BJ (cell line): ENCODE measurements at regions of chr17 and their contacts with region 1.

Region 1: GRCh38 chr17:80331820-80332219 is 71.2 kb downstream of the RNF213 start:
- DNase-seq: no peak
- H3K4me3 ChIP-seq: no peak overlapping the region
- H3K27me3 ChIP-seq: no peaks in the 10 kb centered on the region
- CTCF ChIP-seq: no peak

Region 2: DNA sequence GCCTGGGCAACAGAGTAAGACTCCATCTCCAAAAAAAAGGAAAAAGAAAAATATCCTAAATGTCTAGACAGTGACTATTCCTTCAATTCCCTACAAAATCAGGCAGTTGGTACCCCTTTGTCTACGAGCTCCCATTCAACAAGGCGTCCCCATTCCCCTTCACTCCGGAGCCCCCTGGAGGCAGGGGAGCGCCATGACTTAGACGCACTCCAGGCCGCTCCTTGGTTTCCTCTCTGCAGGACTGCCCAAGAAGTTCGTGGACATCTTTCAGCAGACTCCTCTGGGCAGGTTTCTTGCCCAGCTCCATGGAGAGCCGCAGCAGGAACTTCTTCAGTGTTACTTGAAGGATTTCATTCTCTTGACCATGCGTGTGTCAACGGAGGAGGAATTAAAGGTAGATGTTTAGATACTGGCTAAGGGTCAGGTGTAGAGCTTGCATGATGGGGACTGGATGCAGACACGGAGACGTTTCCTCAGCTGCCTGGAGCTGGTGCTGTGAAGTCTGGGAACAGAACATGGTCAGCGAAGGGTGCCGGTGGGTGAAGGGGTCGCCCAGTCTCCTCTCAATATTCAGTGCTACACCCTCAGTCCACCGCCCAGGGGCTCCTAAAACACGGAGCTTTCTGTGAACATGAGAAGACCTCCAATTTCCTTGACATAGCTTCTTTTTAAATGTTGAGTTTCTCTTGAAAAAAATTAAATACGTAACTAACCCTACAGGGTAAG is 29.8 kb after region 1 on chr17:
- CTCF ChIA-PET with region 1: interaction called, 4 read pairs
- POLR2A ChIA-PET with region 1: interaction called, 19 read pairs
- DNase-seq: no peak
- H3K4me3 ChIP-seq: no peak overlapping the region
- H3K27me3 ChIP-seq: no peaks in the 10 kb centered on the region
- CTCF ChIP-seq: peak; percentile 42